Panc1 (cell line): ENCODE measurements at regions of chr6 and their contacts with region 1.

Region 1: DNA sequence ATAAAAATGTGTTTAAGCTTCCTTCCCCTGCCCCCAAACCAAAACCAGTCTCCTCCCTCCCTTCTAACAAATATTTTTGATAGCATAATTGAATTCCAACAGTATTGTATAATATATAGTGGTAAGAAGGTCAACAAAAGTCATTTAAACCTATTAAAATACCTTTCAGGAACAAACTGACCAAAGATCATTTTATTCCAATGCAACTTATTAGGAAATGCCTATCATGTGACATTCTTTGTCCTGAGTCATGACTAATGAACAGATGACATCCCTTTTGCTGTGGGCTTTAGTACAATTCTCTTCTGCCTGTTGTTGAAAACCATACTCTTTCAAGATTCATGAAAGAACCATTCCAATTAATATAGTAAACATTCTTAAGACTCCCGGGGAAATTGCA is 51.5 kb upstream of the TRAF3IP2 start:
- DNase-seq: no peak
- ATAC-seq: no peak
- H3K4me3 ChIP-seq: no peak overlapping the region
- H3K27ac ChIP-seq: no peak overlapping the region
- H3K4me1 ChIP-seq: peaks cover 6% of the 10 kb centered on the region; the same call in 1 of the 2 replicates
- H3K27me3 ChIP-seq: no peaks in the 10 kb centered on the region
- CTCF ChIP-seq: no peak

Region 2: DNA sequence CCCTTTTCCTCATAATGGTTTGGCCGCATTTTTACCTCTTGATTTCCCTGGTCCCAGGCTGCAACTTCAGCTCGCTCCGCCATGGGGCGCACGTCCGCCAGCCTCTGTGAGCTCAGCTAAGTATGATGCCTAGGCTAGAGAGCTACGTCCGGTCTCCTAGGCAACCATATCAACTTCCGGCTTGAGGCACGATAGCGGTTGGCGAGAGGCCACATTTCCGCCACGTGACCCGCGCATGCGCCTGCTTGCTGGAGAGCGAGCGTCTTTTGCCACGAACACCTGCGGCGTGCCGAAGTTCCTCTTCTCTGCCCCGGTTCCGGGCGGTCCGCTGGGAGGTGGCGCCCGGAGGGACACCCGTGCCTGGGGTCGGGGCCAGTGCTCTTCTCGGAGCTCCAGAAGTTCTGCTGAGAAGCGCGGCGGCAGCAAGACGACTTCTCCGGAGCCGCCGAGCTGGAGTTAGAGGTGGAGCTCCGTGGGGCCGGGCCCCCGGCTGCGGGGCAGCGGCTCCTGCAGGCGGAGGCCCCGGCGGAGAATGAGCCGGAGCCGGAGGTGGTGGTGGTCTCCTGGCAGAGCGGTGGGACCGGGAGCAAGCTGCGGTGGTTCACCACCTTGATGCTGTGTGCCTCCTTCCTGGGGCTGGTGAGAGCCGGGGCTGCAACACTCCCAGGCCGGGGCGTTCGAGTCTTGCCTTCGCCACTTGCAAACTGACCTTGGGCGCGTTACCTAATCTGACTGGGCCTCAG is 397.9 kb before region 1 on chr6:
- CTCF ChIA-PET with region 1: no interaction called
- POLR2A ChIA-PET with region 1: no interaction called
- in situ Hi-C with region 1: no loop called
- intact Hi-C with region 1: loop called (anchors 10 kb)
- DNase-seq: peak; percentile 99
- ATAC-seq: peak; percentile 98
- H3K4me3 ChIP-seq: peak overlapping the region; percentile 77 to 87
- H3K27ac ChIP-seq: peak overlapping the region; percentile 90
- H3K4me1 ChIP-seq: peaks cover 27% of the 10 kb centered on the region
- H3K27me3 ChIP-seq: peaks cover 14% of the 10 kb centered on the region
- CTCF ChIP-seq: peak; percentile 100